Heart right ventricle (tissue), 16 donors: ENCODE measurements at regions of chr16 and their contacts with region 1.

Region 1: GRCh38 chr16:77794586-77794985 is 6.2 kb downstream of the VAT1L start:
- DNase-seq: no peak
- ATAC-seq: no peak
- H3K4me3 ChIP-seq: no peak overlapping the region
- H3K27ac ChIP-seq: no peak overlapping the region
- H3K4me1 ChIP-seq: peaks cover 0 to 4% (median 0%) of the 10 kb centered on the region in 9 donors
- H3K27me3 ChIP-seq: peaks cover 3 to 28% (median 16%) of the 10 kb centered on the region in 7 donors
- CTCF ChIP-seq: no peak

Region 2: GRCh38 chr16:77732241-77732946 is 62.2 kb before region 1 on chr16:
- intact Hi-C with region 1: no loop called
- DNase-seq: no peak
- ATAC-seq: no peak
- H3K4me3 ChIP-seq: no peak overlapping the region
- H3K27ac ChIP-seq: no peak overlapping the region
- H3K4me1 ChIP-seq: no peaks in the 10 kb centered on the region
- H3K27me3 ChIP-seq: no peaks in the 10 kb centered on the region
- CTCF ChIP-seq: no peak

Region 3: DNA sequence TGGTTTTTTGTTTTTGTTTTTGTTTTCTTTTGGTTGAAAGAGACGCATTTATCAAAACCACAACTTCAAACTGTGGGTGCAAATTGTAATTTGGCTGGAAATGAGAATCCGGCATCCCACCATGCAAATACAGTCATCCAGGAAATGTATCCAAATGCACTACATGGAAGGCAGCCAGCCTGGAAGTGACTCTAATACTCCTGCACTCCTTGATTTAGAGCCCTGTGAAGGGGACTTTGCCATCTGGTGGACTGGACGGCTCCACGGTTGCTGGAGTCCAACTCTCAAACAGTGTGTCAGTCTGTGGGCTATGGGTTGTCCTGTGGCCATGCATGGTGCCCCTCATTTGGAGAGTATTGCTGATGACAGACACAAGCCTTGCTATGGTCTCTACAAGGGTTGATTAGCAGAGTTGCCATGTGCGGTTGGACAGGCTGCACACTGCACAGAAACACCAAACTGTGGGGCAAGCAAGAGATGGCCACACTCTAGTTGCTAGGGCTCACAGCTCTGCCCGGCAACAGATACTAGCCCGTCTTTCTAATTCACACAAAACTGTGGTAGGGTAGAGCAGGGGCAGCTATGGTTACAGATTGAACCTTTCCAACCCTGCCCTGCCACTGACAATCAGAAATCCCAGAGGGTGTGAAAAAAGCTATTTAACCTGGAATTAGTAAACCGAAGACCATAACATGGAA is 56.2 kb after region 1 on chr16:
- intact Hi-C with region 1: loop called in 1 of 10 experiments (anchors 5 kb)
- DNase-seq: no peak
- ATAC-seq: peak in 3 of 8 donors; percentile 28 to 37 (median 30)
- H3K4me3 ChIP-seq: no peak overlapping the region
- H3K27ac ChIP-seq: no peak overlapping the region
- H3K4me1 ChIP-seq: peaks cover 0 to 11% (median 0%) of the 10 kb centered on the region in 9 donors
- H3K27me3 ChIP-seq: no peaks in the 10 kb centered on the region
- CTCF ChIP-seq: no peak